ENCODE measurements at regions of chr4 and their contacts with region 1.

Region 1: DNA sequence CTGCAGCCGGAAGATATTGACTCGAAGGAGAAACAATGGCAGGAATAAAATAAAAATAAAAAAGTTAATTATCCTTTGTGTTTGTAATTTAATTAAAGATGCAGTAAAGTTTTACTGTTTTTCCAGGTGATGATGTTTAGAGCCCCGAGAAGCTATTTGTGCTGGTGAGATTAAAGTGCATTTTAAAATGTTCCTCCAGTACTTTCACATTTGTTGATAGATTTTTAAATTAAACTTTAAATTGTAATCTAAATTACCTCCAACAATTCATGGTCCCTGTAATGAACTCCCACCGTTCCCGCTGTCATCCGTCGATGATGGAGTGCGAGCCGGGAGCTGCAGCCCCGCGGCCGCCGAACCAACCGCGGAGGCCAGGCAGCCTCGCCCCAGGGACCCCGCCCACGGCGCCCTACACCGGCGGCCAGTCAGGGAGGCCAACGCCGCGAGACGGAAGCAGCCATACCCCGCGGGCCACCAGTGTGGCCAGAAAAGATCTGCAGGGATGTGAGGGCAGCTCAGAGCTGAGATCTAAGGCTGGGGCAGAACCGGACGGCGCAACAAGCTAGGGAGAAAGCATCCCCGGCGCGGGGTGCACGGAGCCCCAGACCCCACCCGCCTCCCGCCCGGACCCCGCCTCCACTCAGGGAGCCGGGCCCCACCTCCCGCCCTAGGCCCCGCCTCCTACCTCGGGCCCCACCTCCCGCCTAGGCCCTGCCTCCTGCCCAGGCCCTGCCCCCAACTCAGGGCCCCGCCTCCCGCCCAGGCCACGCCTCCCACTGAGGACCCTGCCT is 104.0 kb downstream of the FAM53A start:
- DNase-seq: peak; percentile 96 to 97
- ATAC-seq: peak; percentile 94
- H3K4me3 ChIP-seq: peak overlapping the region; percentile 23 to 66
- H3K27ac ChIP-seq: peak overlapping the region in 1 of 2 donors; percentile 9
- H3K4me1 ChIP-seq: no peaks in the 10 kb centered on the region
- H3K27me3 ChIP-seq: no peaks in the 10 kb centered on the region

Region 2: GRCh38 chr4:1721004-1721665 is 141.0 kb after region 1 on chr4 and contains the starts of genes TACC3 and TMEM129:
- intact Hi-C with region 1: loop called in 1 of 2 experiments (anchors 5 kb)
- DNase-seq: peak; percentile 95
- ATAC-seq: peak; percentile 93
- H3K4me3 ChIP-seq: peak within 1 kb of the TSS; percentile 34 to 39
- H3K27ac ChIP-seq: peak within 1 kb of the TSS in 1 of 2 donors; percentile 86
- H3K4me1 ChIP-seq: no peaks in the 10 kb centered on the region
- H3K27me3 ChIP-seq: no peaks in the 10 kb centered on the region
- total RNA-seq, gene TACC3: 7.6 to 16.1 TPM
- total RNA-seq, gene TMEM129: 24.9 to 26.6 TPM